WTC11 (cell line): ENCODE measurements at regions of chr18 and their contacts with region 1.

Region 1: GRCh38 chr18:24543805-24544498 is 83.5 kb downstream of the HRH4 start:
- DNase-seq: no peak
- ATAC-seq: peak; percentile 65
- H3K4me3 Mint-ChIP-seq: no peak overlapping the region
- H3K27ac Mint-ChIP-seq: no peak overlapping the region
- H3K4me1 Mint-ChIP-seq: peaks cover 24% of the 10 kb centered on the region
- H3K27me3 Mint-ChIP-seq: no peaks in the 10 kb centered on the region
- CTCF ChIP-seq: peak; percentile 35; the same call in 1 of the 2 replicates

Region 2: GRCh38 chr18:24514439-24514838 is 29.5 kb before region 1 on chr18:
- CTCF ChIA-PET with region 1: interaction called, 14 read pairs
- POLR2A ChIA-PET with region 1: no interaction called
- DNase-seq: no peak
- ATAC-seq: peak; percentile 95
- H3K4me3 Mint-ChIP-seq: no peak overlapping the region
- H3K27ac Mint-ChIP-seq: no peak overlapping the region
- H3K4me1 Mint-ChIP-seq: no peaks in the 10 kb centered on the region
- H3K27me3 Mint-ChIP-seq: no peaks in the 10 kb centered on the region
- CTCF ChIP-seq: no peak

Region 3: GRCh38 chr18:24726727-24727492 is 183.0 kb after region 1 on chr18:
- CTCF ChIA-PET with region 1: interaction called, 103 read pairs
- POLR2A ChIA-PET with region 1: interaction called, 4 read pairs
- DNase-seq: peak; percentile 71
- ATAC-seq: peak; percentile 77
- H3K4me3 Mint-ChIP-seq: no peak overlapping the region
- H3K27ac Mint-ChIP-seq: no peak overlapping the region
- H3K4me1 Mint-ChIP-seq: peaks cover 8% of the 10 kb centered on the region
- H3K27me3 Mint-ChIP-seq: no peaks in the 10 kb centered on the region; the same call in 1 of the 2 replicates
- CTCF ChIP-seq: peak; percentile 77

Region 4: DNA sequence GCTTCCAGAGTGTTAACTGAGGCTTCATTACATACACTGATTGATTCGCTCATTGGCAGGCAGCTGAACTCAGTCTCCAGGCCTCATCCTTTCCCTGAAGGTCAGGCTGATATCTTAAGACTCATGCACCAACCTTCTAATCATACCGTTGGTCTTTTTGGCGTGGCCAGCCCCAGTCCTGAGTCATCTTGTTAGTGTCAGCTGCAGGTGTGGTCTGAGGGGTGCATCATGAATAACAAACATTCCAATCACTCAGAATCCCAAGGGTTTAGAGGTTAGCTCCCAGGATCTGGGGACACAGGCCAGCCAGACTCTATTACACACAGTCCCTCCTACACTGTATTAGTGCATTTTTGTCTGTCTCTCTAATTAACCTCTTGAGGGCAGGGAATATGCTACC is 188.0 kb after region 1 on chr18:
- CTCF ChIA-PET with region 1: interaction called, 103 read pairs
- POLR2A ChIA-PET with region 1: interaction called, 4 read pairs
- DNase-seq: no peak
- ATAC-seq: peak; percentile 33; the same call in 1 of the 2 replicates
- H3K4me3 Mint-ChIP-seq: no peak overlapping the region
- H3K27ac Mint-ChIP-seq: no peak overlapping the region
- H3K4me1 Mint-ChIP-seq: 0 out of 2 replicates have a peak, but pooled peaks cover 3% of the 10 kb centered on the region
- H3K27me3 Mint-ChIP-seq: no peaks in the 10 kb centered on the region; the same call in 1 of the 2 replicates
- CTCF ChIP-seq: no peak